SK-N-SH (cell line): ENCODE measurements at regions of chr15 and their contacts with region 1.

Region 1: DNA sequence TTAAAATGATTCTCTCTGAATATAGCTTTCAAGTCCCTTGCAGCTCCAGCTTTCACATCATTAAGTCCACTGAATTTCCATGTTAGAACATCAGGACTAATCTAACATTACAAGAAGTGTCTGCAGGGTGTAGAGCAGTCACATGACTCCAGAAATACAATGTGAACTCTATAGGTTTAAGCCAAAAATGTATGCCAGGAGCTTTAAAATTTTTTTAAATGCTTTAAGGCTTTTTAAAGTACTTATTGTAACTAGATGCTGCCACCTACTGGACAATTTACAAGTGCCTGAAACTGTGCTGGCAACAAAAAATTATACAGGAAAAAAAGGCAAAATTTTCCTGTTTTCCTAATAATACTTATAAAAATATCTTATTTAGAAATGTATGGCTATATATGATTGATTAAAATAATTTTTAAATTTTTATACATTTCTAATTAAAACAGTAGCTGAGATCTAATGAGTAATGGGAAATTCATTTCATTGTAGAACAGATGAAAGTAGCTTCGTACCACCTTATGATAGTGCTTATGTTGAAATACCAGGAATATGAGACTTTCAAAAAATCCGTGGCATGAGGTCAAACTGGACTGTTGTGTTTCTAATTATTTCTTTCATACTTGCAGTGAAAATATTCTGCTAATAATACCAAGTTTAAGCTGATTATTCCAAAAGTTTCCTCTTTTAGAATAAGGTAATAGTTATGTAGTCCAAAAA is 25.7 kb downstream of the FSIP1 start:
- DNase-seq: no peak
- H3K4me3 ChIP-seq: peak overlapping the region in 1 of 2 experiments; percentile 33; a peak in 1 of 4 replicates
- H3K27ac ChIP-seq: no peak overlapping the region
- H3K4me1 ChIP-seq: no peaks in the 10 kb centered on the region; a peak in 1 of 4 replicates
- H3K27me3 ChIP-seq: no peaks in the 10 kb centered on the region
- CTCF ChIP-seq: peak; percentile 81
- EP300 ChIP-seq: no peak
- RAD21 ChIP-seq: peak; percentile 78

Region 2: DNA sequence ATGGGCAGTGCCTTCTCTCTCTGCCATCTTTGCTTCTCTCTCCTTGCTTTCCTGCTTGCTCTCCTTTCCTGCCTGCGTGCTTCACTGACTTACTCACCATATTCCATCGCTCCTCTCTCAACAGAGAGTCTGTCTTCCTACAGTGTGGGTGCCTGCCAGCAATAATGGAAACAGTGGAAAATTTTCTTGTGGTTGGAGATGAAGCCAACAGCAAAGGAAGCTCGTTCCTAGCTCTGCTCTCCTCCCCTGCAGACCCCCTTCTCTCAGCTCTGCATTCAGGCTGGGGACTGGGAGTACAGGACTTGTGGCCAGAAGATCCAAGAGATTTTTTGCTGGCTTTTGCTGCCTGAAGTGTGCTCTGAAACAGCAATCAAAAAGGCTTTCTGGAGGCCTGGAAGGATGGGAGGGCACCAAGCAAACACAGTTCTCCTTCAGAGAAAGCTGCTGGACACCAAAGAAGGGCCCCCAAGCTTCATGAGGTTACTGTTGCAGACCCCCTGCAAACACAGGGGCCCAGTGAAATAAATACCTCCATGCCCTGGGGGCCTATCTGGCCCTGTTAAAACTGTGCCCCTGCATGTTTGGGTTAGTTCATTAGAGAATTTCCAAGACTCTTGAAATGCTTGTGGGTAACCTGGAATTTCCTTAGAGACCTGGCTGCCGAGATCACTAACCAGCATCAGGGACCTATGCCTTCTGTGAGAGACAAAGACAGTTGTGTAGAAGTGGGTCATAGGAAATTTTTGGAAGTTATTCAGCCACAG is 1042.5 kb before region 1 on chr15:
- CTCF ChIA-PET with region 1: interaction called, 22 read pairs
- POLR2A ChIA-PET with region 1: no interaction called
- DNase-seq: no peak
- H3K4me3 ChIP-seq: no peak overlapping the region
- H3K27ac ChIP-seq: peak overlapping the region; percentile 80 to 95
- H3K4me1 ChIP-seq: peaks cover 3 to 5% of the 10 kb centered on the region in 2 experiments; a peak in 2 of 4 replicates
- H3K27me3 ChIP-seq: no peaks in the 10 kb centered on the region
- CTCF ChIP-seq: no peak
- EP300 ChIP-seq: peak in 1 of 2 experiments; percentile 89; a peak in 2 of 4 replicates
- RAD21 ChIP-seq: no peak

Region 3: DNA sequence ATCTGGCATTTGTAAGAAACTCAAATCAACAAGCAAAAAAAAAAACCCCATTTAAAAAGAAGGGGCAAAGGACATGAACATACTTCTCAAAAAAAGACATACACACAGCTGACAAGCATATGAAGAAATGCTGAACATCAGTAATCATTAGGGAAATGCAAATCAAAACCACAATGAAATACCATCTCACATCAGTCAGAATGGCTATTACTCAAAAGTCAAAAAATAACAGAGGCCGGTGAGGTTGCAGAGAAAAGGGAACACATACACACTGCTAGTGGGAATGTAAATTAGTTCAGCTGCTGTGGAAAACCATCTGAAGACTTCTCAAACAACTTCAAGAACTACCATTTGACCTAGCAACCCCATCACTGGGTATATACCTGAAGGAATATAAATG is 375.4 kb before region 1 on chr15:
- CTCF ChIA-PET with region 1: no interaction called
- POLR2A ChIA-PET with region 1: no interaction called
- DNase-seq: no peak
- H3K4me3 ChIP-seq: no peak overlapping the region
- H3K27ac ChIP-seq: no peak overlapping the region
- H3K4me1 ChIP-seq: no peaks in the 10 kb centered on the region
- H3K27me3 ChIP-seq: no peaks in the 10 kb centered on the region
- CTCF ChIP-seq: no peak
- EP300 ChIP-seq: no peak
- RAD21 ChIP-seq: no peak

Region 4: DNA sequence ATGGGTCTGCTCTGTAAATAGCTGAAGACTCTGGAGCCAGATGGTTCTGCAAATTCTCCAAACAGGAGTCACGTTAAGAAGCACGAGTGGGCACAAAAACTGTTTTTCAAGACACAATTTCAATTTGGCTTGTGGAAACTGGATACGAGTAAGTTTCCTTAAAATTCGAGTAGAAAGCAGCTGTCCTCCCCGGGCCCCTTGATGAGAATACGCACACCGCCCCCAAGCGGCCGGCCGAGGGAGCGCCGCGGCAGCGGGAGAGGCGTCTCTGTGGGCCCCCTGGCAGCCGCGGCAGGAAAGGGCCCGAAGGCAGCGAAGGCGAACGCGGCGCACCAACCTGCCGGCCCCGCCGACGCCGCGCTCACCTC is 176.9 kb before region 1 on chr15:
- CTCF ChIA-PET with region 1: interaction called, 38 read pairs
- POLR2A ChIA-PET with region 1: no interaction called
- DNase-seq: peak; percentile 89
- H3K4me3 ChIP-seq: peak overlapping the region; percentile 59 to 72
- H3K27ac ChIP-seq: peak overlapping the region; percentile 72 to 94
- H3K4me1 ChIP-seq: peaks cover 5% of the 10 kb centered on the region in 2 experiments; a peak in 2 of 4 replicates
- H3K27me3 ChIP-seq: no peaks in the 10 kb centered on the region
- CTCF ChIP-seq: peak; percentile 89
- EP300 ChIP-seq: no peak
- RAD21 ChIP-seq: peak; percentile 85

Region 5: GRCh38 chr15:39686000-39686613 is 70.9 kb before region 1 on chr15:
- CTCF ChIA-PET with region 1: interaction called, 139 read pairs
- POLR2A ChIA-PET with region 1: no interaction called
- DNase-seq: peak; percentile 53
- H3K4me3 ChIP-seq: no peak overlapping the region
- H3K27ac ChIP-seq: peak overlapping the region in 1 of 2 experiments; percentile 3; a peak in 1 of 4 replicates
- H3K4me1 ChIP-seq: peaks cover 0 to 7% of the 10 kb centered on the region in 2 experiments; a peak in 2 of 4 replicates
- H3K27me3 ChIP-seq: no peaks in the 10 kb centered on the region
- CTCF ChIP-seq: peak; percentile 88
- EP300 ChIP-seq: no peak
- RAD21 ChIP-seq: peak; percentile 92

Region 6: DNA sequence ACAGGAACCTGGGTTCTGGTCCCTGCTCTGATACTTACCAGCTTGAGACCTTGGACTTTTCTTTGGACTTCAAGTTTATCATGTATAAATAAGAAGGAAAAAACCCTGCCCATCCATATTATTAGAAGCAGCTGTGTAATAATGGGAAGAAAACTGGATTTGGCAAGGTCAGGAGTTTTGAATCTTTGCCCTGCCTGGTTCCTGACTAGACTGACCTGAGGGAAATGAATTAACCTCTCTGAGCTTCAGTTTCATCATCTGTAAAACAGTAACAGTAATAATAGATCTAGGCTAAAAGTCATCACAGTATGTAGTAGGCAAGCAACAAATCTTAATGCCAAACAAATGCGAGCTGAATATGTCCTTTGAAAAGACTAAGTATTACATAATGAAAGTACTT is 43.1 kb before region 1 on chr15:
- CTCF ChIA-PET with region 1: interaction called, 17 read pairs
- POLR2A ChIA-PET with region 1: no interaction called
- DNase-seq: no peak
- H3K4me3 ChIP-seq: no peak overlapping the region
- H3K27ac ChIP-seq: no peak overlapping the region
- H3K4me1 ChIP-seq: no peaks in the 10 kb centered on the region; a peak in 1 of 4 replicates
- H3K27me3 ChIP-seq: no peaks in the 10 kb centered on the region
- CTCF ChIP-seq: no peak
- EP300 ChIP-seq: no peak
- RAD21 ChIP-seq: no peak

Region 7: DNA sequence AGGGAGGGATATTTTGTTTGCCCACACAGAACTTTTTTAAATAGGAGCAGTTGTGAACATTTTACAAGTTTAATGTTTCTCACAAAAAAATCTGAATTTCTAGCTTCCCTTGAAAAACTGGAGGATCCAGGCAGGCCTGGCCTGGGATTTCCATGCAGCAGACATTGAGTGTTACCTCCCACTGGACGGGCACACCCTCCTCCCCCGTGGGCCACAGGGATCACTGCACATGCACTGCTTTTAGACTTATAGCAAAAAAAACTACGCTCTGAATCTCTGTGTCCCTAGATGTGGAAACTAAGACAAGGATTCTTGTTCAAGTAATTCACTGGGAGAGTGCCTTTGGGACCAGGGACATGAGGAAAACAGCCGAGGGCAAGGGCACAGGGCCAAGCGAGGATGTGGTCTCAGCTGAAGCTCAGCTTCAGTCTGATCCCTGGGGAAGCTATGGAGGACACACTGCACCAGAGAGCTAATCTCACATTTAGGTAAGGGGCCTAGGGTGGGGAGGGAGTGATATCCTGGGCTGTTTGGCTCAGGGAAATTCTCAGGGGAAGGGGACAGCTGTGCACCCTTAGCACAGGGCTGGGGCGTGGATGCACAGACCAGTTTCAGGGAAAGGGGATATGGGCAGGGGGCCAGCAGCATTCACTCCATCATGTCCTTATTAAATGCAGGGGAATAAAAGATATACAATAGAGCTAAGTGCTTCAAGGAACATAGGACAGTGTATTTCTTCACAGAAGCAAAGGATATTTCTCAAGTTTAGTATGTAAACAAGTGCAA is 20.4 kb before region 1 on chr15:
- CTCF ChIA-PET with region 1: interaction called, 41 read pairs
- POLR2A ChIA-PET with region 1: no interaction called
- DNase-seq: no peak
- H3K4me3 ChIP-seq: no peak overlapping the region
- H3K27ac ChIP-seq: no peak overlapping the region
- H3K4me1 ChIP-seq: peaks cover 0 to 5% of the 10 kb centered on the region in 2 experiments; a peak in 1 of 4 replicates
- H3K27me3 ChIP-seq: no peaks in the 10 kb centered on the region
- CTCF ChIP-seq: no peak
- EP300 ChIP-seq: no peak
- RAD21 ChIP-seq: no peak

Region 8: DNA sequence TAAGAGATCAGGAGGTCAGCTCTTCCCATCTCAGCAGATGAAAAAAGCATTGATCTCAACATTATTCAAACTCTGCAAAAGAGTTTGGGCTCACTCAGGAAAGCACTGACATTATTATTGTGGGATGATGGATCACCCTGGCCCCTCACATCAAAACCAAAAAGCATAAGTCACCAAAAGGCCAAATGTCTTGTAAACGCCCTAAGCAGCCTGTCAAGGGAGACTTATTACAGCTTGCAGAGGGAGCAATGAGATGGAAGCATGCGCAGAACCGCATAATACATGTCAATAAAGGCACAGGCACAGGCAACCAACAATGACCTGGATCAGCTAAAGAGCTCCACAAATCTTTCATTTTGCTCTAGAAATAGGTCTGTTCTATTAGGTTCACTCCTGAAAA is 21.1 kb after region 1 on chr15:
- CTCF ChIA-PET with region 1: interaction called, 35 read pairs
- POLR2A ChIA-PET with region 1: no interaction called
- DNase-seq: no peak
- H3K4me3 ChIP-seq: no peak overlapping the region
- H3K27ac ChIP-seq: no peak overlapping the region
- H3K4me1 ChIP-seq: peaks cover 0 to 4% of the 10 kb centered on the region in 2 experiments; a peak in 2 of 4 replicates
- H3K27me3 ChIP-seq: no peaks in the 10 kb centered on the region
- CTCF ChIP-seq: no peak
- EP300 ChIP-seq: no peak
- RAD21 ChIP-seq: no peak

Region 9: DNA sequence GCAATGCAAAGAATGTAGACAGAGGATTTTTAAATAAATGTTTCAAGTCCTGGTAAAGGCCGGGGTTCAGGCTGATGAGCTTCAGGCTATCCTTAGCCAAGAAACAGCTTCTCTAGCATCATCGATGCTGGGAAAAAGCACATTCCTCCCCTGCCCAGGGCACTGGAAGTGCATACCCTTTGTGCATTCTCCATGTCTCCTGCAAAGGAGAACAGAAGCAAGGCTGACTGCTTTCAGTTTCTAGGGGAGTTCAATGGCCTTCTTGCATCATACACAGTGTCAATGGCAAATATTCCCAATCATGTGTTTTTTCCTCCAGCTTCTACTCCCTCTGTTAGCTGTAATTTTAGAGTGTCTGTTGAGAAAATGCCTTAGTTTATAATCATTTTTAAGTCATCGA is 103.2 kb after region 1 on chr15:
- CTCF ChIA-PET with region 1: no interaction called
- POLR2A ChIA-PET with region 1: no interaction called
- DNase-seq: no peak
- H3K4me3 ChIP-seq: no peak overlapping the region
- H3K27ac ChIP-seq: no peak overlapping the region
- H3K4me1 ChIP-seq: no peaks in the 10 kb centered on the region
- H3K27me3 ChIP-seq: no peaks in the 10 kb centered on the region
- CTCF ChIP-seq: no peak
- EP300 ChIP-seq: no peak
- RAD21 ChIP-seq: no peak

Region 10: GRCh38 chr15:40182358-40183029 is 425.5 kb after region 1 on chr15:
- CTCF ChIA-PET with region 1: no interaction called
- POLR2A ChIA-PET with region 1: no interaction called
- DNase-seq: no peak
- H3K4me3 ChIP-seq: no peak overlapping the region
- H3K27ac ChIP-seq: no peak overlapping the region
- H3K4me1 ChIP-seq: no peaks in the 10 kb centered on the region; a peak in 2 of 4 replicates
- H3K27me3 ChIP-seq: no peaks in the 10 kb centered on the region
- CTCF ChIP-seq: no peak
- EP300 ChIP-seq: no peak
- RAD21 ChIP-seq: no peak